Activated naive CD4-positive, alpha-beta T cell treated with anti-CD3 and anti-CD28 coated beads for 36 hours (primary cell): ENCODE measurements at regions of chr18 and their contacts with region 1.

Region 1: DNA sequence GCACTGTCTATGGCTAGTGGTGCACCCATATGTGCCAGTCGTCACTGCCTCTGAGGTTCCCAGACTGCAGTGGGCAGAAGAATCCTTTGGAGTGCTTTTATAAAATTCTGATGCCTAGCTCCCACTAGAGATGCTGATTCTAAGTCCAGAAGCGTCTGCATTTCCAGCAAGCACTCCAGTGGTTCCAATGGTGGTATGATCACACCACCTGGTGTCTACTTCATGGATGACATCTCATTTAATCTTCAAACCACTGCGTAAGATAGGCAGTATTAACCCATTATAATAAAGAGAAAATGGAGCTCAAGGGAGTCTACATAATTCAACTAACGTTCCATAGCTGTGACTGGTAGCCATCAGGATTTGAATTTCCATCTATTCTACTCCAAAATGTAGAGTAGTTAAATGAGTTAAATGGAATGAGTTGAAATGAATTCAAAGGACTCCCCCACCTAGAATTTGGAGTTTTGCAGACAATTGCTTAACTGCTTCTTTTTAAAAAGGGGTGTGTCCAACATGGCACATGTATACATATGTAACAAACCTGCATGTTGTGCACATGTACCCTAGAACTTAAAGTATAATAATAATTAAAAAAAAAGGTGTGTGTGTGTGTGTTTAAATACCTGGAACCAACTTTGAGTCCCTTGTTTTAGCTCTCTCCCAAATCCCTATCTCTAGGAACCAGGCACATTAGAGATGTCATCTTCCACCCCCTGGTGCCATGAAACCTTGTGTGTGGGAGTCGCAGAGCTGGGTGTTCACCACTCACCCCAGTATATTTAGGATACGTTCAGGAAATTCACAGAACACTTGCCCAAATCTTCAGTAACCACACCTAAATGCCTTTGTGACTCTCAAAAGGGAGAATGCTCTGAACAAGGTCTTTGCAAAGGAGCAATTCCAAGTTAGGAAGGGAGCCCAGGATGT is 14.1 kb downstream of the LAMA3 start:
- DNase-seq: peak; percentile 26
- H3K4me3 Mint-ChIP-seq: no peak overlapping the region
- H3K27ac Mint-ChIP-seq: no peak overlapping the region
- H3K4me1 Mint-ChIP-seq: no peaks in the 10 kb centered on the region
- H3K27me3 Mint-ChIP-seq: peaks cover 8% of the 10 kb centered on the region

Region 2: DNA sequence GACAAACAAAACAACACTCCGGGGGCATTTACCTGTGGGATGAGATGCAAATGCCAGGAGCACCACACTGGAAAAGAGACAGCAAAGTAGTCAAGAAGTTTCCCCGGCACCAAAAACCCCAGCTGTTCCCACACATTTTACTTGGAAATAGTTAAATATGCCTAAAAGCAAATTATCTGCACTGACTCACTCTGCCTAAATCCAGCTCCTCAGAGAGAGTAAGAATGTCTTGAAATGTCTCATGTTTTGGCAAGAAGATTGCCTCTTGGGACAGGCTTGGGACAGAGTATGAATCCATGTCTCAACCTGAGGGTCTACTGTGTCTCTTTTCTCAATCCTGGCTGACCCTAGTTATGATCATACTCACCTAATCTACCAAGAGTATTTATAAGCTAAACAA is 337.7 kb before region 1 on chr18:
- CTCF ChIA-PET with region 1: no interaction called
- intact Hi-C with region 1: no loop called
- DNase-seq: no peak
- H3K4me3 Mint-ChIP-seq: no peak overlapping the region
- H3K27ac Mint-ChIP-seq: no peak overlapping the region
- H3K4me1 Mint-ChIP-seq: no peaks in the 10 kb centered on the region
- H3K27me3 Mint-ChIP-seq: no peaks in the 10 kb centered on the region

Region 3: DNA sequence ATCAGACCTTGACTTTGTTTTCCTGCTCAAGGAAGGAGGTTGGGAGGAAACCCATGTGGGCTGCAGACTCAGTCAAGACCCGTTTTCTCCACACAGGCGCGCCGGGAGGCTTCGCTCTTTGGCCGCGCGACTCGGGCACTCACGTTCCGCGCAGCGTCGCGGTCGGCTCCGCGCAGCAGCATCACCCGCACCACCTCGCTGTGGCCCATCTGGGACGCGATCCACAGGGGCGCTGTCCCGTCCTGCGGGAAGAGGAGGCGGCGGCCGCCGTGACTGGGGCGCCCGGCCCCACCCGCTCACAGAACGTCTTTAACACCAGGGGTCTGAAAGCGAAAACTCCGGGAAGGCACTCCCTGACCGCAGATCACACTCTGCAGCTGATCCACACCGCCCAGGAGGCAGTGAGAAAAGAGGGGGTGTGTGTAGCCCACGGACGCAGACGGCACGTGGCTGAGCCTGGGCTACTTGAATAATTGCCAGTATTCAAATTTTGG is 83.9 kb before region 1 on chr18:
- CTCF ChIA-PET with region 1: interaction called, 60 read pairs
- intact Hi-C with region 1: loop called (anchors 1 kb)
- DNase-seq: peak; percentile 9
- H3K4me3 Mint-ChIP-seq: peak overlapping the region; percentile 50
- H3K27ac Mint-ChIP-seq: no peak overlapping the region
- H3K4me1 Mint-ChIP-seq: no peaks in the 10 kb centered on the region
- H3K27me3 Mint-ChIP-seq: peaks cover 36% of the 10 kb centered on the region

Region 4: DNA sequence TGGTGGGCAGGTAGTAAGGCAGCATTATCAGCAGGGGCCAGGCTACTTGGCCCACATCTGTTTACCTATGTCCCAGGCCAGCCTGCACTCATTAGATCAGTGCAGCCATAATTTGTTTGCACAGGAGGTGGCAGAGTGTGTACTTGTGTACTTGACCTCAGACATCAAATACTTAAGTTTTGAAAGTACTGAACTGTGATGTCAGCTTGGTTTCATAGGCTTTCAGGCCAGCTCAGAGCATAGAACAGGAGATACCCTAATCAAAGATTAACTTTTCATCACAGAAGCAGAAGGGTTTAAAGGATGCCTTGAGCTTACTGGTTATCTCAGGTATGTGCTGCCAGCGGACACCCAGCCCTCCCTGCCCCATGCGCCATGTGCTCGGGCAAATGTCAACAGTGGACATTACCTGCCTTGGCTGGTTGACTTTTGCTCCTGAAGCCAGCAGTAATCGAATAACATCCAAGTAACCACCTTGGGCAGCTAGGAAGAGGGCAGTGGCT is 73.8 kb before region 1 on chr18:
- CTCF ChIA-PET with region 1: interaction called, 60 read pairs
- intact Hi-C with region 1: no loop called
- DNase-seq: no peak
- H3K4me3 Mint-ChIP-seq: no peak overlapping the region
- H3K27ac Mint-ChIP-seq: no peak overlapping the region
- H3K4me1 Mint-ChIP-seq: peaks cover 8% of the 10 kb centered on the region
- H3K27me3 Mint-ChIP-seq: no peaks in the 10 kb centered on the region

Region 5: DNA sequence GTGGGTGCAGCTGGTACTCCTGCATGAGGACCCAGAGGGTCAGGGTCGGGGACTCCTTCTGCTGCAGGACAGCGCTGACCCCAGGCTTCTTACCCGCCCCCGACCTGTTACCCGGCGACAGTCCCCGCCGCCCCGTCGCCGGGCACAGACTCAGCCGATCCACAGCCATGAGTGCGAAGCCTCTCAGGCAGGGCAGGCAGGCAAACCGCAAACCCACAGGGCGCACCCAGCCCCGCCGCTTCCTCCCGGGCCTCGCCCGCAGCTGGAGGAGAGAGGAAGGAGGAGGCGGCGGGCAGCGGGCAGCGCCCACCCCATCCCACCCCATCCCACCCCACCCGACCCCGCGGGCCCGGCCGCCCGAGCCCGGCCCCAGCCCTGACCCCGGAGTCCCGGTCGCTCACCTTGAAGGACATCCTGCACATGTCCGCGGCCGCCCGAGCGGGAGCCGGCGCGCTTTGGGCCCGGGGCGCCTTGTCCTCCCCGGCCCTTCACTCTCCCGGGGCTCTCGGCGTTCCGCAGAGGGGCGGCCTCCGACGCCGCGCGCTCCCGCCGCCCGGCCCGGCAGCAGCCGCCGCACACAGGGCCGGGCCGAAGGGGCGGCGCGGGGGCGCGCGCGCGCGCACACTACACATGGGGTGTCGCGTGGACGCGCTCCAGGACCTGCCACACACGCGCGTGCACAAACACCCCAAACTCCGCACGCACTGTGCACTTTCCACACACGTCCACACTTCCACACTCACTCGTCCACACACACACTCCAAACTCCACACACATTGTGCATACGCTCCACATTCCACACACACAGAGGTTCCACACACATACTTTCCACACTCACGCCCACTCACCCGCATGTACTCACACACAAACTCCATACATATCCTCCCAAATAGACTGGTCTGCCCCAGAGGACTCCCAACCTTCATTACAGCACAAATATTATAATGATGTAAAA is 40.7 kb before region 1 on chr18 and contains the start of gene ANKRD29:
- CTCF ChIA-PET with region 1: interaction called, 10 read pairs
- intact Hi-C with region 1: no loop called
- DNase-seq: peak; percentile 74
- H3K4me3 Mint-ChIP-seq: peak within 1 kb of the TSS; percentile 76
- H3K27ac Mint-ChIP-seq: no peak within 1 kb of the TSS
- H3K4me1 Mint-ChIP-seq: peaks cover 21% of the 10 kb centered on the region
- H3K27me3 Mint-ChIP-seq: peaks cover 18% of the 10 kb centered on the region
- total RNA-seq, gene ANKRD29: not detected

Region 6: DNA sequence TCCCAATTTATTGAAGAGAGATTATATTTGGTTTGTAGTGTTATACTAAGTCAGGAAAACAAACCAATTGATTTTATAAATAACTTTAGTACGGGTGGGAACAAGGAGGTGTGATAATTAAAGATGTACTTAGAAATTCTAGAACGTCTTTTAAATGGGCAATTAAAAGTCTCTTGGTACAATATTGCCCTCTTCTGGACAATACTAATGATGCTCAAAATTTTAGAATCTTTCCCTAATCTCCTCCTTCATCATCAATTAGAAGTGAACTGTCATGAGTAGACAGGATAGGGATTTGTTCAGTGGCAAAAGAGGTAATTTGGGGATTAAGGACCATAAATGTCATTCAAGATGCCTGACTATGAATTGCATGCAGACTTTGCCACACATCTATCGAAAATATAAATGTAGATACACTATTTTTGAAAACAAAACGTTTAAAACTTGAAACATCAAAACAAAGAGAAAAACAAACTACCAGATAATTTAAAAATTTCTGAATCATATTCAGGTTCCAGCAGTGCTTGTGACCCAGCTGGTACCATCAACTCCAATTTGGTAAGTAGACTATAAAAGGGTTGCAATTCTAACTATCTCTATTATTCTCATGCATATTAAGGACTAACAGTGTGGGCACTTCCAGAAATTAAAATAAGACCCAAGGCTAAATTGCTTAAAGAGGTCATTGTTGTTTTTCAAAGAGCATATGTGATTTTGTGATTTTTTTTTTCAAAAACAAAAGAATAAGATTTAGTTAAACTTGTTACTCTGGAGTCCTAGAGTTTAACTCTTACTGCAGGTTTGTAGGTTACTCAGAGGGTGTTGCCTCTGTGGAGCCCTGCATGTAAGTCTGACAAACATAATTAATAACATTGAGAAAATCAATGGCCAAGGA is 109.5 kb after region 1 on chr18:
- CTCF ChIA-PET with region 1: interaction called, 7 read pairs
- intact Hi-C with region 1: loop called (anchors 2 kb)
- DNase-seq: no peak
- H3K4me3 Mint-ChIP-seq: no peak overlapping the region
- H3K27ac Mint-ChIP-seq: no peak overlapping the region
- H3K4me1 Mint-ChIP-seq: peaks cover 21% of the 10 kb centered on the region
- H3K27me3 Mint-ChIP-seq: no peaks in the 10 kb centered on the region

Region 7: DNA sequence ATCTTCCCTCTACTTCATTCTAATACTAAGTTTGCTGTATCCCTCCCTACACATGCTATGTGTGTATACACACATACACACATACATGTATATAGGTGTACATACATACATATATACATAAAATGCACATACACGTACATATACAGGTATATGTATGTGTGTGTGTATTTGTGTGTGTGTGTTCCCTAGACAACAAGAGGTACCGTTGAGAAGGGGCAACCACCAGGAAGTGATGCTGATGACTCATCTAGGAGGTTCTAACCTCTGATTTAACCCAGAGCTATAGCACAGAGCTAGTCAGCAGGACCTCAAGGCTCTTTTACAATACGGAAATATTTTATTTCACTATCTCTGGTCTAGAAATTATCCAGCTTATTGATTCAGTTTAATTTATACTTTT is 125.1 kb after region 1 on chr18:
- CTCF ChIA-PET with region 1: no interaction called
- intact Hi-C with region 1: no loop called
- DNase-seq: peak; percentile 61
- H3K4me3 Mint-ChIP-seq: no peak overlapping the region
- H3K27ac Mint-ChIP-seq: no peak overlapping the region
- H3K4me1 Mint-ChIP-seq: peaks cover 37% of the 10 kb centered on the region
- H3K27me3 Mint-ChIP-seq: no peaks in the 10 kb centered on the region